Activated naive CD4-positive, alpha-beta T cell treated with anti-CD3 and anti-CD28 coated beads, Interleukin-2, amount 10 ng/mL, durations not matched to agents 7 days and 5 days (primary cell): ENCODE measurements at regions of chr11 and their contacts with region 1.

Region 1: GRCh38 chr11:118705111-118705741 is 25.8 kb upstream of the TREH start:
- DNase-seq: peak; percentile 76
- H3K4me3 Mint-ChIP-seq: peak overlapping the region; percentile 1
- H3K27ac Mint-ChIP-seq: peak overlapping the region; percentile 85
- H3K4me1 Mint-ChIP-seq: peaks cover 32% of the 10 kb centered on the region
- H3K27me3 Mint-ChIP-seq: peaks cover 29% of the 10 kb centered on the region

Region 2: GRCh38 chr11:118689851-118690552 is 15.2 kb before region 1 on chr11:
- CTCF ChIA-PET with region 1: interaction called, 10 read pairs
- DNase-seq: peak; percentile 92
- H3K4me3 Mint-ChIP-seq: peak overlapping the region; percentile 58
- H3K27ac Mint-ChIP-seq: peak overlapping the region; percentile 45
- H3K4me1 Mint-ChIP-seq: peaks cover 48% of the 10 kb centered on the region
- H3K27me3 Mint-ChIP-seq: peaks cover 40% of the 10 kb centered on the region